ENCODE measurements at regions of chr5 and their contacts with region 1.

Region 1: GRCh38 chr5:176543428-176544173 is 5.5 kb upstream of the CDHR2 start:
- DNase-seq: peak; percentile 78 to 89
- ATAC-seq: peak; percentile 88
- H3K4me3 ChIP-seq: peak overlapping the region; percentile 45 to 63
- H3K27ac ChIP-seq: peak overlapping the region in 1 of 2 donors; percentile 16
- H3K4me1 ChIP-seq: no peaks in the 10 kb centered on the region
- H3K27me3 ChIP-seq: no peaks in the 10 kb centered on the region

Region 2: GRCh38 chr5:176388444-176389134 is 155.0 kb before region 1 on chr5 and contains the starts of genes HIGD2A and NOP16:
- intact Hi-C with region 1: loop called (anchors 5 to 10 kb)
- DNase-seq: peak; percentile 100
- ATAC-seq: peak; percentile 98
- H3K4me3 ChIP-seq: peak within 1 kb of the TSS; percentile 35 to 39
- H3K27ac ChIP-seq: peak within 1 kb of the TSS; percentile 31 to 56
- H3K4me1 ChIP-seq: peaks cover 0 to 3% of the 10 kb centered on the region in 2 donors
- H3K27me3 ChIP-seq: no peaks in the 10 kb centered on the region
- total RNA-seq, gene HIGD2A: 46.8 to 60.9 TPM
- total RNA-seq, gene NOP16: 9.7 to 19.2 TPM

Region 3: GRCh38 chr5:176647030-176647866 is 103.6 kb after region 1 on chr5 and contains the start of gene TSPAN17:
- intact Hi-C with region 1: loop called (anchors 5 kb)
- DNase-seq: peak; percentile 100
- ATAC-seq: peak; percentile 98
- H3K4me3 ChIP-seq: peak within 1 kb of the TSS; percentile 40 to 82
- H3K27ac ChIP-seq: peak within 1 kb of the TSS in 1 of 2 donors; percentile 26
- H3K4me1 ChIP-seq: no peaks in the 10 kb centered on the region
- H3K27me3 ChIP-seq: no peaks in the 10 kb centered on the region
- total RNA-seq, gene TSPAN17: 17.9 to 22.9 TPM

Measured in aorta (tissue), 5 donors.